Mucosa of descending colon (tissue), 3 donors: ENCODE measurements at regions of chr7 and their contacts with region 1.

Region 1: GRCh38 chr7:2680792-2681490 is 7.1 kb upstream of the AMZ1 start:
- DNase-seq: peak in 2 of 3 donors; percentile 85 to 90
- ATAC-seq: peak; percentile 83
- H3K4me3 ChIP-seq: no peak overlapping the region
- H3K4me1 ChIP-seq: no peaks in the 10 kb centered on the region
- CTCF ChIP-seq: peak; percentile 62

Region 2: GRCh38 chr7:2444476-2444875 is 236.5 kb before region 1 on chr7:
- intact Hi-C with region 1: loop called in 1 of 2 experiments (anchors 10 kb)
- DNase-seq: no peak
- ATAC-seq: peak; percentile 29
- H3K4me3 ChIP-seq: no peak overlapping the region
- H3K4me1 ChIP-seq: no peaks in the 10 kb centered on the region
- CTCF ChIP-seq: no peak

Region 3: DNA sequence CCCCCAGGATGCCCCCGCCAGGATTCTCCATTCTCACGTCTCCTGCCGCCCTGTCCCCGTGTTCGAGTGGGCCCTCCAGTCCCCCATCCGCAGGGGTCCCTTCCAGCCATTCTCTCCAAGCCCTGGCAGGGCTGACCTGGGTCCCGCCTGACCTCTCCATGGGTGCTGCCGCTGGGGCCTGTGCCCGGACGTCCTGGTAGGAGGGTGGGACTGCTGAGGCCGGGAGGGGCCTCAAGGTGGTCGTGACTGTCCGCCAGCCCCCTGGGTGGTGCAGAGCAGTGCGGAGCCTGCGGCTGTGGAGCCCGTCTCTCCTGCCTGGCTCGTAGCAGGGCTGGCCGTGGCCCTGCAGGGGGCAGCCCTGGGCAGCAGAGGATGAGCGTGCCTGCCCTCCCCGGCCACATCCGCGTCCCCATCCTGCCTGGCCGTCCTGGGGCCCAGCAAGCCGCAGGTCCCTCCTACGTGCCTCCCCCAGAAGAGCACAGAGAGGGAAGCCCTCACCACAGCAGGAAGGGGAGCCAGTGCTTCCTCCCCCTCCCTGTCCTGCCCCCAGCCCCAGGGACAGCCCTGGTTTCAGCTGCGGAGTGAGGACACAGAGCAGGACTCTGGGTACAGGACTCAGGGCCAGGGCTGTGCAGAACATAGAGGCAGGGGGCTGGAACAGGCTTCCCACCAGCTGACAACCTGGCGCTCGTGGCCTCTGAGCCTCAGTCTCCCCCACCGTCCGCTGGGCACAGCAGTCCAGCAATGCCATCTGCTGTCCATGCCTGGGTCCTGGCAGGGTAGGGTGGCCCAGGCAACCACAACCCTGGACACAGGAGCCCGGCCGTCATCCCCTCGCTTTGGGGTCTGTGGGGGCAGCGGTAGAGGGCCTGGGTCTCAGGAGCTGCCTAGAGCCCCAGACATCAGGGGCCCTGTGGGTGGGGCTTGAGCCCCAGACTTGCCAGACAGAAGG is 203.2 kb before region 1 on chr7:
- intact Hi-C with region 1: loop called in 1 of 2 experiments (anchors 10 kb)
- DNase-seq: peak; percentile 74 to 83 (median 79)
- ATAC-seq: peak; percentile 90
- H3K4me3 ChIP-seq: no peak overlapping the region
- H3K4me1 ChIP-seq: peaks cover 17% of the 10 kb centered on the region
- CTCF ChIP-seq: peak; percentile 76

Region 4: DNA sequence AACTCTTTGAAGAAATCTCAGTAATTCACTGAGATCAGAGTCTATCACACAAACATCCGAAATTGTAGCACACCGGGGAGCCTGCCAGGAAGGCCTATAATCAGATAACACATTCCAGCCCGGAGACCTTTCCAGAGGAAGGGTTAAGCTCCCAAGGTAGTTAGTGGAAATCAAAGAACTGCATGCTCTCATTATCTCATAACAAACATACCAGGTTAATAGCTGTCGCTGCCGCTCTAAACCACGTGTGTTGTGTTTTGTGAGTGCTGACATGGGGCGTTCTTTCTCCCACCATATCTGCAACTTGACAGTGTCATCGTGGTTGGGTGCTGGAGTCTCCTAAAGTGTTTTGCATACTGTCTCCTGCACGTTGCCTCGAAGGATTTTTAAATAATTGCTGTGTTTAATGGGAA is 483.4 kb after region 1 on chr7:
- intact Hi-C with region 1: no loop called
- DNase-seq: no peak
- ATAC-seq: no peak
- H3K4me3 ChIP-seq: no peak overlapping the region
- H3K4me1 ChIP-seq: no peaks in the 10 kb centered on the region
- CTCF ChIP-seq: no peak